RWPE1 (cell line): ENCODE measurements at regions of chr22 and their contacts with region 1.

Region 1: DNA sequence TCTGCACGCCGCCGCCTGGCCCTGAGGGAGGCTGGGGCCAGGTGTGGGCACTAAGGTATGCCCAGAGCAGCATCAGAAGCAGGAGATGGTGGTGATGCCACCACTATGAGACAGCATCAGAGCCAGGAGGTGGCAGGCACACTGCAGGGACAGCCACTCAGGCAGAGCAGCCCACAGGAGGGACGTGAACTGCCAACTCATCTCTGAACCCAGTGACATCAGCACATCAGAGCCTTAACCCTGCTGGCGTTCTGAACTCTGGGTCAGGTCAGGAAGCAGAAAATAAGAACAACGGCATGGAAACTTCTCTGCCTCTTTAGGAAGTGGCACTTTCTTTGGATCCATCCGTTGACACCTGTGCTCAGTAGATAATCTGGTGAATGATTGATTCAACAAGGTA is 14.7 kb upstream of the IFT27 start:
- DNase-seq: no peak
- H3K27ac ChIP-seq: no peak overlapping the region
- CTCF ChIP-seq: no peak

Region 2: DNA sequence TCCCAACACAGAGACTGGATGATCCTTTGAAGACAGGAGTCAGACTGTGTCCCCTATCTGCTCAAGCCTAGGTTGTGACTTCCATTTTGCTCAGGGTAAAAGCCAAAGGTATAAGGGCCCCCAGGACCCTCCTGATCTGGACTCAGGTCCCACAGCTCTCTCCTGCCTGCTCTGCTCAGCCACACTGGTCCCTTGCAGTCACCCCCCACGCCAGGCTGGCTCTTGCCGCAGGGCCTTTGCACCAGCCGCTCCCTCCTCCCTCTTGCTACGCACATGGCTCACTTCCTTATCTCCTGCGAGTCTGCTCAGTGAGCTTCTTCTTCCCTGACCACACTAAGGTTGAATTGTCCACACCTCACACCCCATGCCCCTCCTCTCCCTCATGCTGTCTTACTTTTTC is 58.7 kb before region 1 on chr22:
- CTCF ChIA-PET with region 1: no interaction called
- POLR2A ChIA-PET with region 1: no interaction called
- DNase-seq: no peak
- H3K27ac ChIP-seq: no peak overlapping the region
- CTCF ChIP-seq: no peak

Region 3: GRCh38 chr22:37017300-37017771 is 226.7 kb after region 1 on chr22:
- CTCF ChIA-PET with region 1: no interaction called
- POLR2A ChIA-PET with region 1: interaction called, 10 read pairs
- DNase-seq: no peak
- H3K27ac ChIP-seq: peak overlapping the region; percentile 88
- CTCF ChIP-seq: no peak